PC-9 (cell line): ENCODE measurements at regions of chr20 and their contacts with region 1.

Region 1: DNA sequence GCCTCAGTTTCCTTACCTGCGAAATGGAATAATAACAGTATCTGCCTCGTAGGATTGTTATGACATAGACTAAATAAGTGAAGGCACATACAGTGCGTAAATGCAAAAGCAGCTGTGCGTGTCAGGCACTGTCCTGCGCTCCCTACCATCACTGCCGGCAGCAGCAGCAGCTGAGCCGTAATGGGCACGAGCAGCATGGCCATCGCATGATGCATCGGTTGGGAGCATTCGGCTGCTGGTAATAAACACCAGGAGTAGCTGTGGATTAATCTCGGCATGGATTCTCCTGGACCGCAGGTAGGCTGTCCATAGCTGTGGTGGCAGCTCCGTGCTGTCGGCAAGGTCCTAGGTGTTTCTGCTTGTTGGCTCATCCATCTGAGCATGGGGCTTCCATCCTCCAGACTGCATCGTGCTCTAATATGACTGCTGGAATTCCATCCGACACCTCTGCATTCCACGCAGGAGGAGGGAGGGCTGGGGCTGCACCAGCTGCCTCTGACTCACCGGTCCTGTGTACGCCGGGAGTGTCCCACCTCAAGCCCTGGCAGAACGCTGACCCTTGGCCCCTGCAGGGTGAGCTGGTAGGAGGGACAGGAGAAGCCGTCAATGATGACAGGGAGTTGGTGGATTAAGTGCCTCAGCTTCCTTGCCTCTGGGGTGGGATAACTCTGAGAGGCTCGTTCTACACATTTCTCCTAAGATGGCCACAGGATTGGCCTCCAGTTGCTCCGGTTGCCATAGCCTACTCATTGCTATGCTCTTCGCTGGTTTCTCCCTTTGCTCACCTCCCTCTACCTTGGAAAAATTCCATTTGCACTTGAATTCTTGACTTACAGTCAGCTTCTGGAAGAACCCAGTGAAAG is 100.9 kb upstream of the PMEPA1 start:
- DNase-seq: peak; percentile 86 to 91
- H3K4me3 ChIP-seq: no peak overlapping the region
- H3K27ac ChIP-seq: peak overlapping the region; percentile 38; the same call in 1 of the 2 replicates
- H3K4me1 ChIP-seq: peaks cover 25% of the 10 kb centered on the region
- H3K27me3 ChIP-seq: no peaks in the 10 kb centered on the region
- CTCF ChIP-seq: no peak

Region 2: GRCh38 chr20:57718490-57719271 is 92.1 kb before region 1 on chr20:
- CTCF ChIA-PET with region 1: no interaction called
- POLR2A ChIA-PET with region 1: no interaction called
- intact Hi-C with region 1: loop called (anchors 2 kb)
- DNase-seq: peak; percentile 97 to 98
- H3K4me3 ChIP-seq: peak overlapping the region; percentile 60
- H3K27ac ChIP-seq: peak overlapping the region; percentile 76
- H3K4me1 ChIP-seq: peaks cover 41% of the 10 kb centered on the region
- H3K27me3 ChIP-seq: no peaks in the 10 kb centered on the region
- CTCF ChIP-seq: no peak

Region 3: DNA sequence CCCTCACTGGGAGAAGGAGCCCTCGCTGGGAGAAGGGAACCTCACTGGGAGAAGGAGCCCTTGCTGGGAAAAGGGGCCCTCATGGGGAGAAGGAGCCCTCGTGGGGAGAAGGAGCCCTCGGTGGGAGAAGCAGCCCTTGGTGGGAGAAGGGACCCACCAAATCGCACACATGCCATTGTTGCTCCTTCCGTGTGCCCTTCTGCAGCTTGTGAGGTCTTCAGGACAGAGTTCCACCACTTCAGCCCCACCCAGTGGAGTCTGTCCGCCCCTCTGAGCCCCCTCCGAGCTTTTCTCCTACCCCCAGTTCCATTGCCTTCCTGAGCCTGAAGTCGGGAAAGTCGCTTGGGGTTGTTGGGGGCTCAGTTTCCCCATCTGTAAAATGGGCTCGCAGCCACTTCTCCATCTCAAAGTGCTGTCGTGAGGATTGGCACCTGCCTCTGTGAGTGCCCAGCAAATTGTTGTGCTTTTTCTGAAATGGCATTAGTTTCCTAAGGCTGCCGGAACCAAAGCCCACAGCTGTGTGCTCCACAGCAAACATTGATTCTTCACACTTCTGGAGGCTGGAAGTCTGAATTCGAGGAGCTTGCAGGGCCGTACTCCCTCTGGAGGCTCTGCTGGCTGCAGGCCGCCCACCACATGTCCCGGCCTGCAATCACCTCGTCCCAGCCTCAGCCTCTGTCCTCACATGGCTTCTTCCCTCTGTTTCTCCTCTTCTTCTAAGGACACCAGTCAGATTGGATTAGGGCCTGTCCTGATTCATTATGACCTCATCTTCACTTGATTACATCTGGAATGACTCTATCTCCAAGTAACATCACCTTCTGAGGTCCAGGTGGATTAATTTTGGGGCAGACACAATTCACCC is 23.8 kb after region 1 on chr20:
- CTCF ChIA-PET with region 1: no interaction called
- POLR2A ChIA-PET with region 1: no interaction called
- intact Hi-C with region 1: no loop called
- DNase-seq: peak in 1 of 2 experiments; percentile 11
- H3K4me3 ChIP-seq: no peak overlapping the region
- H3K27ac ChIP-seq: no peak overlapping the region
- H3K4me1 ChIP-seq: no peaks in the 10 kb centered on the region
- H3K27me3 ChIP-seq: no peaks in the 10 kb centered on the region
- CTCF ChIP-seq: no peak

Region 4: DNA sequence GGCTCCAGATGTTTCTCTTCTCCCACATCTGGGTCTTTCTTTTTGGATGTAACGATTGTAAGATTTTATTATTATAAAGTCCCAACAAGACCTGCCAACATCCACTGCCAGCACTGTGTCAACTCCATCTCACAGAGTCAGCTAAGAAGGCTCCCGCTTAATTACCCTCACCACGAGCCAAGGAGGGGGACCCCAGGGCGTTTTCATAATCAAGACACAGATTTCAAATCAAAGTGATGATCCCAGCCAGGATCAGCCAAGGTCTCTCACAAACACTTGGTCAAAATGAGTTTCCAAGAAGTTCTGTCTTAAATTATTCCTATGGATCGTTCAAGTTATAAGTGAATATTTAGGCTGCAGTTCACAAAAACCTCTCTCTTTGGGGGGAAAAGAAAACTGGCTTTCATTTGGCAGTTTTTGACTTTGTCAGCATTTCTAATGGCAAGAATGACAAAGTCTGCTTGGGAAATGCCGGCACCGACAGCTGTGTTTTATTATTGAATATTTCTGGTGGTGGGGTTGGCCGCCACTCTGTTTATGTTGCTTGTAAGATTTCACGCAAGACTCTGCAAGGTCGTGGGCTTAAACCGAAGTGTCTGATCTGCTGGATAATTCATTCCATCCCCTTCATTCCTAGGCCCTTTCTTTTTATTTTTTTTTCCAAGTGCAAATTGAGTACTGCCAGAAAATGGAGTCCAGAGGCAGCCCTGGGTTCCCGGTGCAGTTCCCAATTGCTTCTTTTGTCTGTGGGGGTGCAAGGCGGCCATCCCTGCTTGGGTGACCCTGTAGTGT is 69.2 kb after region 1 on chr20:
- CTCF ChIA-PET with region 1: no interaction called
- POLR2A ChIA-PET with region 1: no interaction called
- intact Hi-C with region 1: no loop called
- DNase-seq: no peak
- H3K4me3 ChIP-seq: no peak overlapping the region
- H3K27ac ChIP-seq: no peak overlapping the region
- H3K4me1 ChIP-seq: no peaks in the 10 kb centered on the region
- H3K27me3 ChIP-seq: no peaks in the 10 kb centered on the region
- CTCF ChIP-seq: no peak

Region 5: DNA sequence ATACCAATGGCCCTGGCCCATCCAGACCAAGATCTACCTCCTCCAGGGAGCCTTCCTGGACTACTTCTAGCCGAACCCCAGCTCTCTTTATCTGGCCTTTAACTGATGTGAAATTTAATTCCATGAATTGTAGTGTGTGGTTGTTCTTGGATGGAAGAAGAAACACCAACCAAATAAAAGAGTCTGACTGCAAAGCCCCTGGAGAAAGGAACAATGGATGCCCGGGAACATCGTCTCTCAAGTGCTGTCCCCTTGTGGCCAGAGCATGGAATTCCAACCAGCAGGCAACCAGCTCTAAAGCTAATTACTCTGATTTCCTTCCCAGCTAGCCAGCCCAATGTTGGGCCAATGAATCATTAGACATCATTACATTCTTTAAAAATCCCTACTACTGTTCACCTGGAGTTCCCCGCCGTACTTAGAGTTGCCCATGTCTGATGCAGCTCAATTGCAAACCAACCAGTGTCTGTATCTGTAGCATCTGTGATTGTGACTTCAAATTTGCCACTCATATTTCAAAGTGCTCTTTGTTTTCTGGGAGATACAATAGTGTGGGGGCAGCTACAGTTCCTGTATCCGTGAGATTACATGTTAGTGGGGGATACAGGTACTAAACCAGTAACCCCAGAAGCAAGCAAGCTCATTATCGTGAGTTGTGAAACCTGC is 276.6 kb after region 1 on chr20:
- CTCF ChIA-PET with region 1: interaction called, 4 read pairs
- POLR2A ChIA-PET with region 1: no interaction called
- intact Hi-C with region 1: loop called (anchors 10 kb)
- DNase-seq: peak; percentile 50 to 52
- H3K4me3 ChIP-seq: no peak overlapping the region
- H3K27ac ChIP-seq: no peak overlapping the region
- H3K4me1 ChIP-seq: 0 out of 2 replicates have a peak, but pooled peaks cover 9% of the 10 kb centered on the region
- H3K27me3 ChIP-seq: no peaks in the 10 kb centered on the region
- CTCF ChIP-seq: peak; percentile 95